ENCODE measurements at regions of chr1 and their contacts with region 1.

Region 1: DNA sequence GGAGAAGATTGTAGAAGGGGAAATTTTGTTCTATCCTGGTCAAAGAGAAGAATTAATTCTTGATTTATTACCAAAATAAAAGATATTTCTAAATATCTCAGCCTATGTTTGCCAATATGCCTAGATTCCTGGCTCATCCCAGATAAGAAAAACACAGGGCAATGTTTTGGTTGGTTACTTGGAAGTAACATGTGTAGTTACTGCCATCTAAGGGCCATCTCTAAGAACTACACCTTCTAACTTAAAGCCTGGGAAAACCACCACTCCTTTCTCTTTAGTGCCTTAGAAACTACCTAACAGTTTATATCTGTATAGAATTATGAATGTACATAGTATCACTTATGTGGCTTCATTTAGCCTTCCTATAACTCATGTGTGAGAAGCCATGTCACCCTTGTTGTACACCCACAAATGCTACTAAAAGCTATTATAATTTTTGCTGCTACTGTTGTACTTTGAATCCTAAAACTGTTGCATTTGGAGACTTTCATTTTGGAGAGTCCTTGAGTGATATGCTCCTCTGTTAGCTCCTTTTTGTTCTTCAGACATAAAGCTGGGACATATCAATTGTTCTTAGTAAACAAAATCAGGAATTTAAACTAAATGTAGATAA is 4.5 kb downstream of the AIM2 start:
- DNase-seq: peak; percentile 69
- ATAC-seq: no peak
- H3K4me3 ChIP-seq: no peak overlapping the region
- H3K4me3 Mint-ChIP-seq: peak overlapping the region; percentile 68
- H3K27ac ChIP-seq: peak overlapping the region in 1 of 2 donors; percentile 89
- H3K27ac Mint-ChIP-seq: peak overlapping the region; percentile 86
- H3K4me1 ChIP-seq: peaks cover 56 to 62% of the 10 kb centered on the region in 2 donors
- H3K4me1 Mint-ChIP-seq: peaks cover 65% of the 10 kb centered on the region
- H3K27me3 ChIP-seq: no peaks in the 10 kb centered on the region
- H3K27me3 Mint-ChIP-seq: no peaks in the 10 kb centered on the region
- CTCF ChIP-seq: peak; percentile 94

Region 2: GRCh38 chr1:157725221-157725577 is 1346.9 kb before region 1 on chr1:
- CTCF ChIA-PET with region 1: no interaction called
- POLR2A ChIA-PET with region 1: no interaction called
- intact Hi-C with region 1: loop called (anchors 2 kb)
- DNase-seq: peak; percentile 86
- ATAC-seq: peak; percentile 21
- H3K4me3 ChIP-seq: peak overlapping the region in 1 of 5 experiments; percentile 45
- H3K4me3 Mint-ChIP-seq: peak overlapping the region; percentile 71
- H3K27ac ChIP-seq: peak overlapping the region; percentile 80 to 94
- H3K27ac Mint-ChIP-seq: peak overlapping the region; percentile 98
- H3K4me1 ChIP-seq: peaks cover 65 to 69% of the 10 kb centered on the region in 2 donors
- H3K4me1 Mint-ChIP-seq: peaks cover 74% of the 10 kb centered on the region
- H3K27me3 ChIP-seq: no peaks in the 10 kb centered on the region
- H3K27me3 Mint-ChIP-seq: no peaks in the 10 kb centered on the region
- CTCF ChIP-seq: no peak

Region 3: GRCh38 chr1:158177700-158178450 is 894.2 kb before region 1 on chr1:
- CTCF ChIA-PET with region 1: interaction called, 3 read pairs
- POLR2A ChIA-PET with region 1: no interaction called
- intact Hi-C with region 1: loop called (anchors 5 kb)
- DNase-seq: peak; percentile 65
- ATAC-seq: peak; percentile 69
- H3K4me3 ChIP-seq: peak overlapping the region; percentile 39 to 62 (median 50)
- H3K4me3 Mint-ChIP-seq: peak overlapping the region; percentile 82
- H3K27ac ChIP-seq: peak overlapping the region; percentile 22 to 53
- H3K27ac Mint-ChIP-seq: peak overlapping the region; percentile 86
- H3K4me1 ChIP-seq: peaks cover 58 to 72% of the 10 kb centered on the region in 2 donors
- H3K4me1 Mint-ChIP-seq: peaks cover 73% of the 10 kb centered on the region
- H3K27me3 ChIP-seq: no peaks in the 10 kb centered on the region
- H3K27me3 Mint-ChIP-seq: no peaks in the 10 kb centered on the region
- CTCF ChIP-seq: no peak

Region 4: GRCh38 chr1:158329733-158330132 is 742.3 kb before region 1 on chr1:
- CTCF ChIA-PET with region 1: interaction called, 17 read pairs
- POLR2A ChIA-PET with region 1: no interaction called
- intact Hi-C with region 1: no loop called
- DNase-seq: peak; percentile 63
- ATAC-seq: no peak
- H3K4me3 ChIP-seq: no peak overlapping the region
- H3K4me3 Mint-ChIP-seq: no peak overlapping the region
- H3K27ac ChIP-seq: no peak overlapping the region
- H3K27ac Mint-ChIP-seq: no peak overlapping the region
- H3K4me1 ChIP-seq: peaks cover 43 to 55% of the 10 kb centered on the region in 2 donors
- H3K4me1 Mint-ChIP-seq: peaks cover 25% of the 10 kb centered on the region
- H3K27me3 ChIP-seq: no peaks in the 10 kb centered on the region
- H3K27me3 Mint-ChIP-seq: no peaks in the 10 kb centered on the region
- CTCF ChIP-seq: peak; percentile 42

Region 5: GRCh38 chr1:158951956-158952355 is 120.1 kb before region 1 on chr1:
- CTCF ChIA-PET with region 1: no interaction called
- POLR2A ChIA-PET with region 1: interaction called, 18 read pairs
- intact Hi-C with region 1: no loop called
- DNase-seq: peak; percentile 72
- ATAC-seq: peak; percentile 70
- H3K4me3 ChIP-seq: peak overlapping the region in 4 of 5 experiments; percentile 0 to 37 (median 18)
- H3K4me3 Mint-ChIP-seq: peak overlapping the region; percentile 87
- H3K27ac ChIP-seq: peak overlapping the region; percentile 54 to 58
- H3K27ac Mint-ChIP-seq: peak overlapping the region; percentile 95
- H3K4me1 ChIP-seq: peaks cover 15 to 29% of the 10 kb centered on the region in 2 donors
- H3K4me1 Mint-ChIP-seq: peaks cover 22% of the 10 kb centered on the region
- H3K27me3 ChIP-seq: no peaks in the 10 kb centered on the region
- H3K27me3 Mint-ChIP-seq: no peaks in the 10 kb centered on the region
- CTCF ChIP-seq: no peak

Region 6: GRCh38 chr1:159040206-159040605 is 31.9 kb before region 1 on chr1:
- CTCF ChIA-PET with region 1: interaction called, 21 read pairs
- POLR2A ChIA-PET with region 1: no interaction called
- intact Hi-C with region 1: no loop called
- DNase-seq: no peak
- ATAC-seq: no peak
- H3K4me3 ChIP-seq: no peak overlapping the region
- H3K4me3 Mint-ChIP-seq: no peak overlapping the region
- H3K27ac ChIP-seq: peak overlapping the region in 1 of 2 donors; percentile 59
- H3K27ac Mint-ChIP-seq: no peak overlapping the region
- H3K4me1 ChIP-seq: peaks cover 0 to 7% of the 10 kb centered on the region in 2 donors
- H3K4me1 Mint-ChIP-seq: peaks cover 19% of the 10 kb centered on the region
- H3K27me3 ChIP-seq: no peaks in the 10 kb centered on the region
- H3K27me3 Mint-ChIP-seq: no peaks in the 10 kb centered on the region
- CTCF ChIP-seq: no peak

Region 7: GRCh38 chr1:159177273-159177907 is 105.3 kb after region 1 on chr1:
- CTCF ChIA-PET with region 1: no interaction called
- POLR2A ChIA-PET with region 1: no interaction called
- intact Hi-C with region 1: no loop called
- DNase-seq: peak; percentile 60
- ATAC-seq: peak; percentile 51
- H3K4me3 ChIP-seq: no peak overlapping the region
- H3K4me3 Mint-ChIP-seq: no peak overlapping the region
- H3K27ac ChIP-seq: no peak overlapping the region
- H3K27ac Mint-ChIP-seq: no peak overlapping the region
- H3K4me1 ChIP-seq: peaks cover 7 to 11% of the 10 kb centered on the region in 2 donors
- H3K4me1 Mint-ChIP-seq: peaks cover 12% of the 10 kb centered on the region
- H3K27me3 ChIP-seq: peaks cover 0 to 23% (median 17%) of the 10 kb centered on the region in 4 experiments
- H3K27me3 Mint-ChIP-seq: peaks cover 17% of the 10 kb centered on the region
- CTCF ChIP-seq: no peak

Region 8: GRCh38 chr1:160307118-160307854 is 1235.2 kb after region 1 on chr1:
- CTCF ChIA-PET with region 1: no interaction called
- POLR2A ChIA-PET with region 1: no interaction called
- intact Hi-C with region 1: no loop called
- DNase-seq: peak; percentile 68
- ATAC-seq: peak; percentile 94
- H3K4me3 ChIP-seq: peak overlapping the region in 1 of 5 experiments; percentile 24
- H3K4me3 Mint-ChIP-seq: peak overlapping the region; percentile 41
- H3K27ac ChIP-seq: peak overlapping the region; percentile 39 to 72
- H3K27ac Mint-ChIP-seq: peak overlapping the region; percentile 91
- H3K4me1 ChIP-seq: peaks cover 7 to 22% of the 10 kb centered on the region in 2 donors
- H3K4me1 Mint-ChIP-seq: peaks cover 35% of the 10 kb centered on the region
- H3K27me3 ChIP-seq: no peaks in the 10 kb centered on the region
- H3K27me3 Mint-ChIP-seq: no peaks in the 10 kb centered on the region
- CTCF ChIP-seq: no peak